ENCODE measurements at regions of chr3 and their contacts with region 1.

Region 1: GRCh38 chr3:113745273-113746068 is 578 bp downstream of the NAA50 start:
- DNase-seq: peak; percentile 76
- ATAC-seq: peak; percentile 66

Region 2: DNA sequence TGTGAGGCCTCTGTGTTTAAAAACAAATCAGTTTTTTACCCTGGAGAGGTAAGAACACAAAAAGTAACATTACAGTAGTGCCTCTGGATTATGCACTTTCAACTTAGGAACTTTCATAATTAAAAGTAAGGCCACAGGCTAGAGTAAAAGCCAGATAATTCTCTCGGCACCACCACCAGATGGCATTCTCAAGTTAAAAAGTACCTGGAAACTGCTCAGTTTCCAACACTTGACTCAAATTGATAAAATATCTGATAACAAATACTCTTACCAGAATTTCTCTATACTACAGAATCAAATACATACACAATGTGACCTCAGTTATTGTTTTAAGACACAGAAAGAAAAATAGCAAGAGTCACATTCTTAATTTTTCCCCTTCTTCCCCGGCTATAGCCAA is 250.4 kb before region 1 on chr3:
- intact Hi-C with region 1: loop called (anchors 5 kb)
- DNase-seq: no peak
- ATAC-seq: no peak

Region 3: DNA sequence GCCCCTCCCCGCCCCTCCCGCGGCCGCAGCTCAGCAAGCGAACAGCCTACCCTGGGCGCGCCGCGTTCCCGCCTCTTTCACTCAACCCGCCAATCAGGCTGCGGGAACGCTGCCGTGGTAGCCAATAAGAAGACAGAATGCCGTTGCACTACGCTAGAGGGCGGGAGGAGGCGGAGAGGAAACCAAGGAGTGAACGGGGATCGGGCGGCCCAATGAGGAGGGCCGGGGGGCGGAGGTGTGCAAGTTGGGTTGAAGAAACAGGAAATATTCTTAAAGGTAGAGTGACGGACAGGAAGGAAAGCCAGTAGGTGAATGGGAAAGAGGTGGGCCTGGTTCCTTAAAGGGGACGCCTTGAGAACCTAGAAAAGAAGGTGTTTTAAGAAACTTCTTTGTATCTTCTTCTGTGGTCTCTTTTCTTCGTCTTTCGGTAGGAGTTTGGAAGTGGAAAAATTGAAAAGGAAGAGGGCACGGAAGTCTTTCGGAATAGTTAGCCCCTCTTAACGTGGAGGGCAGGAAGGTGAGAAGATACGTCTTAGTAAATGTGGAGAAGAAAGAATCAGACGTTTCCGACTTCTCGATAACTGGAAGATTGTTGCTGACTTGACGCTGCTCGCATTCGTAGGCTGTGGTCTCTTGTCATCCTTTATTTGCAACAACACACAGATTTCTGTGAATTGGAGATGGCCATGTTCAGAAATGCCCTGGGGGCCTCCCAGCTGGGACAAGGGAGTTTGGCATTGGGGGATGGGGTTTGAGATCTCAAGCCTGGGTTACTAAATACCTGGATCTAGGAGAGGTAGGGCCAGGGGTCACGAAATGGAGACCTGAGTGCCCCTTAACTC is 48.6 kb before region 1 on chr3:
- intact Hi-C with region 1: loop called (anchors 1 kb)
- DNase-seq: peak; percentile 100
- ATAC-seq: peak; percentile 98

Region 4: DNA sequence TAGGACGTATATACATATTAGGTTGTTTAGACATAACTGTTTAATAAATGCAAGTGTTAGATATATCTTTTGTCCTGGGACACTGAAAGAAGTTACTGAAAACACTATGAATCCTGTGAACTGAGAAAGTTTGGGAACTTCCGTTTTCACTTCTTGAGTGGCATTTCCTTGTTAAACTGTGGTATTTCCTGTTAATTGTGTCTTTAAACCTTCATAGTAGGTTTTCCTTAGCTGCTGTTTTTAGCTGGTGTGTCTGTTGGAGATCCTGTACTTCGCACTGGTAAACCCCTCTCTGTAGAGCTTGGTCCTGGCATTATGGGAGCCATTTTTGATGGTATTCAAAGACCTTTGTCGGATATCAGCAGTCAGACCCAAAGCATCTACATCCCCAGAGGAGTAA is 38.5 kb after region 1 on chr3:
- intact Hi-C with region 1: loop called (anchors 2 kb)
- DNase-seq: no peak
- ATAC-seq: no peak

Region 5: DNA sequence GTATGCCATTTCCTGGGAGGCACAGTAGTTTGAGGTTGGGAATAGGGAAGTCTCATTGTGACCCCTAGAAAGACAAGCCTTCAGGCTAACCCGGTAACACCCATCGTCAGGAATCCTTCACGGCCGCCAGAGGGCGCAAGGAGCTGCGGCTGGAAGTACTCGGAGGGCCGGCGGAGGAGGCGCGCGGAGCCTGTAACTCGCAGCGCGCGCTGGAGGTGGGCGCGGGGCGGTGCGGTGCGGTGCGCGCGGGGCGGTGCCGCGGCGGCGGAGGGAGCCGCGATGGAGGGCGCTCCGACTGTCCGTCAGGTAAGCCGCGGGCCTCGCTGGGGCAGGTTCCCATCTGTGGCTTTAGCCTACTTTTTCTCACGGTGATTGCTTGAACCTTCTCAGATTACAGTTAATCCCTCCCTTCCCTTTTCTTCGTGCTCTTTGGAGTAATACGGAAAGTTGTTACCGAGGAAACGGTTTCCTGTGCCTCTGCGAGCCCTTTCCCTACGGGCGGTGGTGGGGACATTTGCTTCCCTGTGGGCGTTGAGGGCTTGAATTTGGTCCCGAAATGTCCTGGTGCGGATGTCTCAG is 93.2 kb after region 1 on chr3 and contains the start of gene GRAMD1C:
- intact Hi-C with region 1: no loop called
- DNase-seq: peak; percentile 94
- ATAC-seq: peak; percentile 96
- total RNA-seq, gene GRAMD1C: 2.4 TPM

Region 6: GRCh38 chr3:114056130-114057010 is 310.9 kb after region 1 on chr3 and contains the starts of genes CCDC191 and QTRT2:
- intact Hi-C with region 1: loop called (anchors 2 kb)
- DNase-seq: peak; percentile 98
- ATAC-seq: peak; percentile 100
- total RNA-seq, gene CCDC191: 0.78 TPM
- total RNA-seq, gene QTRT2: 4.3 TPM

Region 7: DNA sequence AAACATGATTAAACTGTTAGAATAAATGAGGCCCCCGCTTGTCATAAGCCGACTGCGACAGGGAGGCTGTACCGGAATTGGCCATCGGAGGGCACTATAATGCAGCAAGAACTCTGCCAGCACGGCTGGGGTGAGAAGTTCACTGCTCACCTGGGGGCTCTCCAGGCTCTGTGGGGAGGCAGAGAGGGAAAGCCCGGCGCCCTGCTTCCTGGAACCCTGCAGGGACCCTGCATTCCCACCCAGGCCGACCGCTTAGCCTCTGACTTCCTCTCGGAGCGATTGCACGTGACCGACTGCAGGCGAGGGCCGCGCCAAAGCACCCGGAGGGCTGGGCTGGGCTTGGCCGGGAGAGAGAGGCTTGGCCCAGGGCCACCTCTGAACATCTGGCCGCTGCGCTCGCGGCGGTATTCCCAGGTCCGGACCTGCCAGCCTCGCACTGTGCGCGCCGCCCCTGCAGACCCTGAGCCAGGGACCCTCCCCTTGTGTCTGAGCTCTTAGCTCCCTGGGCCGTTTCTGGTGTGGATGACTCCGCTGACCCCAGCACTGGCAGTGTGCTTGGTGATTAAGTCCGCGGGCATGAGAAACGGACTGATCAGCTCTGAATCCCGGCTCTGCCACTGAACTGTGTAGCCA is 407.2 kb after region 1 on chr3:
- intact Hi-C with region 1: loop called (anchors 10 kb)
- DNase-seq: peak; percentile 90
- ATAC-seq: peak; percentile 89

Region 8: DNA sequence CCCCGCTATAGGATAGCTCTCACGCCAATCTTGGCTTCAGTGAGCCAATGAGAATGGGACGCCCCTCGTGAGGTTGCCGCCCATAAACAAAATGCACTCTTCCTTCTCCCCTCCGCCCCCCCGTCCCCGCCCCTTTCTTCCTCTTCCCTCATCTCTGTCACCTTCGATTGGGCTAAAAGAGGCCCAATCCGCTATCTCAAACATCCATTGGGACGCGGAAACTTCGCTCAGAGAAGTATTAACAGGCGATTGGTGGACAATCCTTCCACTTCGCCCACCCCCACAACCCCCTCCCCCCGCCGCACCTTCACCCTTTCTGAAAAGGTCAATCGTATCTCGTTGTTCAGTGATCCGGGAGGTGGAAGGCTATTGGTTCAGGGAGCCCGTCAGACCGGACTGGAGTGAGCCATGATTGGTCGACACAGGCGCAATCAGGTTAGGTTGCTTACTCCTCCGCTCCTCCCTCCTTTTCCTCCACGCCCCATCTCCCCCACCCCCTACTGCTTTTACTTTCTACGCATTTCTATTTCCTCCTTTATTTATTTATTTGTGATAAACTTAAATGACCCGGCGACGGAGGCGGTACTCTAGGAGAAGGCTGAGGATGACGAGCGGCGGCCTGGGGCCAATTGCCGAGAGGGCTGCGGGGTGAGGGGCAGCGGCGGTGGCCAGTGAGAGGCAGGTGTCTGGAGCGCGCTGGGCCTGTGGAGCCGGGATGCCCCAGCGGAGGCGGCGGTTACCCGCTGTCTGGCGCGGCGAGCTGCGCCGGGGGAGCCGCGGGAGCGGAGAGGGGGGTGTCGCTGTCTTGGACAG is 1402.1 kb after region 1 on chr3:
- intact Hi-C with region 1: loop called (anchors 2 kb)
- DNase-seq: peak; percentile 99
- ATAC-seq: peak; percentile 94